ENCODE measurements at regions of chr20 and their contacts with region 1.

Region 1: DNA sequence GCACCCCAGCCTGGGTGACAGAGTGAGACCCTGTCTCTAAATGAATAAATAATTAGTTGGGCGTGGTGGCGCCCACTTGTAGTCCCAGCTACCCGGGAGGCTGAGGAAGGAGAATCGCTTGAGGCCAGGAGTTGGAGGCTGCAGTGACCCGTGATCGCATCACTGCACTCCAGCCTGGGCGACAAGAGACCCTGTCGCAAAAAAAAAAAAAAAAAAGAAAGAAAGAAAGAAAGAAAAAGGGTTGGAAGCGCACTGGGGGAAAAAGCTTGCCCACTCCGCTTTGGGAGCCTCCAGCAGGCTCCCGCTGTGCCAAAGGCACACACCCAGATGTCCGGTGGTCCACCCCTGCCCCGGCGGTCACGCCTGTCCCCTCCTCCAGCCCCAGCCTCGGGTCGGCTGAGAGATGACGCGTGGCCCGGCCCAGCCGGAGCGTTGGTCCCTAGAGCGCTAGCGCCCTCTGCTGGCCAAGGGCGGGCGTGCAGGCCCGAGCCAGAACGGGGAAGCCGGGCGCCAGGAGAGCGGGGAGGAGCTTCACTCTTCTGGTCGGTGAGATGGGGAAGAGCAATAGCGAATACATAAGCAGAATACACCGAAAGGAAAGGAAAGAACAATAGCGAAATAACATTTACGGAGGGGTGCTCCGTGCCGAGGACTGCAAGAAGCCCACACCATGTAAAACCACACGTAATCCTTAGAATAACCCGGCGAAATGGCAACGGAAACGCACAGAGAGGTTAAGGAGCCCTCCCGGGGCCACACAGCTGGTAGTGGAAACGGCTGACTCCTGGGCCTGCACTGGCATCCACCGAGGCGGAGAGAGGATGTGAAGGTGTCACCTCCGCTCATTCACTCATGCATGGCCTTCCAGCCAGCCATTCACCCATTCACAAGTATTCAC is 41.7 kb downstream of the UBE2V1 start:
- DNase-seq: peak; percentile 81 to 88
- ATAC-seq: peak; percentile 96 to 97
- H3K4me3 ChIP-seq: peak overlapping the region; percentile 38
- H3K27ac ChIP-seq: peak overlapping the region; percentile 81 to 89
- H3K4me1 ChIP-seq: peaks cover 19% of the 10 kb centered on the region; the same call in 2 of the 3 replicates
- CTCF ChIP-seq: peak; percentile 98
- EP300 ChIP-seq: no peak
- POLR2A ChIP-seq: no peak
- RAD21 ChIP-seq: peak; percentile 99 to 100

Region 2: DNA sequence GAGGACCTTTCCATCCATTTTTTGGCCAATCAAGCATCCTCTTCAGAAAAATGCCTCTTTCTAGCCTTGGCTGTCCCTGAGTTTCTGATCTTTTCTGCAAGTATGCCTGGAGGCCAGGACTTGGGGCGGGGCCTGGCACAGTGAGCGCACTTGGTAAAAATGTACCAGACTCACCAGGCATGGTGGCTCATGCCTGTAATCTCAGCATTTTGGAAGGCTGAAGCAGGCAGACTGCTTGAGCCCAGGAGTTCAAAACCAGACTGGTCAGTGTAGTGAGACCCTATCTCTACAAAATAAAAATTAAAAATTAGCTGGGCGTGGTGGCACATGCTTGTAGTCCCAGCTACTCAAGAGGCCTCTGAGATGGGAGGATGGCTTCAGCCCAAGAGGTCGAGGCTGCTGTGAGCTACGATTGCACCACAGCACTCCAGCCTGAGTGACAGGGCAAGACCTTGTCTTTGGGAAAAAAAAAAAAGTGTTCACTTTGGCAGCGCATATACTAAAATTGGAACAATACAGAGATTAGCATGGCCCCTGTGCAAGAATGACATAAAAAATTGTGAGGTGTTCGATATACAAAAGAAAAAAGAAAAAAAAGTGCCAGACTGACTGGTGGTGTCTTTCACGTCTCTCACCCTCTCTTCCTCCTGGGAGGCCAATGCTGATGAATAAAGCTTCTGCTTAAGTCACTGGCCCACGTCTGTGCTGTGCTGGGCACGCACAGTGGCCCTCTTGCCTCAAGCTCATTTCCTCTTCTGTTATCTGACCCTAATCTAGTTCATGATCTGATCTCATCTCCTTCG is 276.7 kb before region 1 on chr20:
- CTCF ChIA-PET with region 1: no interaction called
- POLR2A ChIA-PET with region 1: no interaction called
- DNase-seq: no peak
- ATAC-seq: peak in 1 of 2 experiments; percentile 12; a peak in 1 of 6 replicates
- H3K4me3 ChIP-seq: no peak overlapping the region
- H3K27ac ChIP-seq: peak overlapping the region; percentile 81 to 84
- H3K4me1 ChIP-seq: peaks cover 41% of the 10 kb centered on the region
- CTCF ChIP-seq: no peak
- EP300 ChIP-seq: no peak
- POLR2A ChIP-seq: no peak
- RAD21 ChIP-seq: no peak

Region 3: GRCh38 chr20:49915378-49916145 is 155.7 kb before region 1 on chr20 and contains the start of gene SPATA2:
- CTCF ChIA-PET with region 1: interaction called, 18 read pairs
- POLR2A ChIA-PET with region 1: no interaction called
- DNase-seq: peak; percentile 89 to 97
- ATAC-seq: peak; percentile 90 to 94
- H3K4me3 ChIP-seq: peak within 1 kb of the TSS; percentile 93
- H3K27ac ChIP-seq: peak within 1 kb of the TSS; percentile 99
- H3K4me1 ChIP-seq: peaks cover 23% of the 10 kb centered on the region
- CTCF ChIP-seq: no peak
- EP300 ChIP-seq: no peak
- POLR2A ChIP-seq: peak; percentile 45
- RAD21 ChIP-seq: no peak
- polyA plus RNA-seq, gene SPATA2: 4.9 and 5.1 TPM in 2 replicates

Region 4: GRCh38 chr20:49964964-49965780 is 106.1 kb before region 1 on chr20:
- CTCF ChIA-PET with region 1: interaction called, 1,049 read pairs
- POLR2A ChIA-PET with region 1: no interaction called
- DNase-seq: peak; percentile 78 to 85
- ATAC-seq: peak; percentile 94 to 95
- H3K4me3 ChIP-seq: no peak overlapping the region
- H3K27ac ChIP-seq: no peak overlapping the region; a peak in 1 of 6 replicates
- H3K4me1 ChIP-seq: peaks cover 25% of the 10 kb centered on the region
- CTCF ChIP-seq: peak; percentile 55
- EP300 ChIP-seq: no peak
- POLR2A ChIP-seq: no peak
- RAD21 ChIP-seq: peak; percentile 34 to 47; a peak in 4 of 5 replicates

Region 5: DNA sequence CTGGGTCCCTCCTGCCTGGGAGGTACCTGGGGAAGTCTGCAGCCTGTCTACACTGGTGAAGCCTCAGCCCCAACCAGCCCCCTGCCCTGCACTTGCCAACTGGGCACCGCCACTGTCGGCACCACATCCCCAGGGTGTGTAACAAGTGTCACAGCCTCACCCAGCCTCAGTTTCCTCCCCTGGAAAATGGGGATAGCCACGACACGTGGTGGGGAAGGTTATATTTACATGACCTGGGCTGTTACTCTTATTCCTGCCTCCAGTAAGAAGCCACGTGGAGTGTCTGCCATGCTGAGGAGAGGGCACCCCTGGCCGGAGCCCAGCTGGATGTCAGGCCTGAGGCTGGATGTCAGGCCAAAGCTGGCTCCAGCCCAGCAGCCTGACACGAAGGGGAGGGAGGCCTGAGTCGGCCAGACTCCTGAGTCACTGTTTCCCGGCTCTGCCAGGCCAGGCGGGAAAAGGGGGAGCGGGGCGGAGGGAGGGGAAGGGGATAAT is 43.6 kb before region 1 on chr20:
- CTCF ChIA-PET with region 1: interaction called, 23 read pairs
- POLR2A ChIA-PET with region 1: no interaction called
- DNase-seq: peak; percentile 84 to 87
- ATAC-seq: peak; percentile 36 to 60
- H3K4me3 ChIP-seq: no peak overlapping the region
- H3K27ac ChIP-seq: peak overlapping the region; percentile 93 to 95
- H3K4me1 ChIP-seq: peaks cover 55% of the 10 kb centered on the region
- CTCF ChIP-seq: no peak
- EP300 ChIP-seq: peak in 1 of 2 experiments; percentile 58; a peak in 1 of 5 replicates
- POLR2A ChIP-seq: no peak
- RAD21 ChIP-seq: peak in 1 of 2 experiments; percentile 18; a peak in 1 of 5 replicates

Region 6: GRCh38 chr20:50048420-50049166 is 22.6 kb before region 1 on chr20:
- CTCF ChIA-PET with region 1: interaction called, 26 read pairs
- POLR2A ChIA-PET with region 1: no interaction called
- DNase-seq: no peak
- ATAC-seq: peak; percentile 25 to 46; a peak in 3 of 6 replicates
- H3K4me3 ChIP-seq: no peak overlapping the region
- H3K27ac ChIP-seq: peak overlapping the region in 1 of 2 experiments; percentile 76; a peak in 3 of 6 replicates
- H3K4me1 ChIP-seq: peaks cover 12% of the 10 kb centered on the region; the same call in 1 of the 3 replicates
- CTCF ChIP-seq: no peak
- EP300 ChIP-seq: no peak
- POLR2A ChIP-seq: no peak
- RAD21 ChIP-seq: no peak

Region 7: GRCh38 chr20:50095476-50096078 is 24.3 kb after region 1 on chr20:
- CTCF ChIA-PET with region 1: interaction called, 153 read pairs
- POLR2A ChIA-PET with region 1: no interaction called
- DNase-seq: no peak
- ATAC-seq: peak in 1 of 2 experiments; percentile 34; a peak in 1 of 6 replicates
- H3K4me3 ChIP-seq: no peak overlapping the region
- H3K27ac ChIP-seq: no peak overlapping the region
- H3K4me1 ChIP-seq: peaks cover 10% of the 10 kb centered on the region; the same call in 2 of the 3 replicates
- CTCF ChIP-seq: no peak
- EP300 ChIP-seq: no peak
- POLR2A ChIP-seq: no peak
- RAD21 ChIP-seq: no peak

Measured in A549 (cell line).